ENCODE measurements at regions of chr14 and their contacts with region 1.

Region 1: GRCh38 chr14:21852061-21852664 is 178.5 kb upstream of the OR4E1 start:
- DNase-seq: peak; percentile 77
- ATAC-seq: peak; percentile 83
- H3K4me3 Mint-ChIP-seq: no peak overlapping the region
- H3K27ac Mint-ChIP-seq: no peak overlapping the region
- H3K4me1 Mint-ChIP-seq: no peaks in the 10 kb centered on the region
- H3K27me3 Mint-ChIP-seq: peaks cover 20% of the 10 kb centered on the region
- CTCF ChIP-seq: peak; percentile 30

Region 2: GRCh38 chr14:21840765-21841164 is 11.4 kb before region 1 on chr14:
- CTCF ChIA-PET with region 1: interaction called, 42 read pairs
- POLR2A ChIA-PET with region 1: no interaction called
- DNase-seq: no peak
- ATAC-seq: peak; percentile 65
- H3K4me3 Mint-ChIP-seq: no peak overlapping the region
- H3K27ac Mint-ChIP-seq: no peak overlapping the region
- H3K4me1 Mint-ChIP-seq: no peaks in the 10 kb centered on the region
- H3K27me3 Mint-ChIP-seq: peaks cover 32% of the 10 kb centered on the region
- CTCF ChIP-seq: no peak

Region 3: DNA sequence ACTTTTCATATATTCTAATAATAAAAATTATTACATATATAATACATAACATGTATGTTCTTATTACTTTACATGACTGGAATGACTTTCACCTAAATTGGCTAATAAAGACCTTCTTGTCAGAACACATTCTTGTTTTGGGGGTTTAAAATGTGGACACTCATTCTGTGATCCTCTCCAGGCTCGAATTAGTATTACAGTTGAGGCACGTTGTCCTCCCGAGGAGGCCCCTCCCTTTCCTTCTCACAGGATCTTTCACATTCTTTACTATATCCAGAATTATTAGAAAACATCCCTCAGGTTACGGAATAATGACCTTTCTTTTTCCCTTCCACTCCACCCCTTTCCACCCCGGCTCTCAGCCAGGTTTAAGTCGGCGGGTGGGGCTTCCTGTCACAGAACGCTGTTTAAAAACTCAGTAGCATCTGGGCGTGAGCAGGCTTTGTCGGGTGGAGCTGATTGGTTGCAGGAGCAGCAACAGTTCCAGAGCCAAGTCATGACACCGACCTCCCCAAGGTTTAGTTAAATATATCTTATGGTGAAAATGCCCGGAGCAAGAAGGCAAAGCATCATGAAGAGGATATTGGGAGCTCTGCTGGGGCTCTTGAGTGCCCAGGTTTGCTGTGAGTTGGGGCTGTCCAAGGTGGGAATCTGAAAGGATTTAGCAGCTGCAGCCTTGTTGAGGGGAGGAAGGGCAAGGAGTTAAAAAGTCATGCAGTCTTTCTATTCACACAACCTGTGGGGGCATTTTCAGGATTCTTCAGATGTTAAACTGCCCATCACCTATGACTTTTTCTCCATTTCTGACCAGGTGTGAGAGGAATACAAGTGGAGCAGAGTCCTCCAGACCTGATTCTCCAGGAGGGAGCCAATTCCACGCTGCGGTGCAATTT is 218.2 kb after region 1 on chr14:
- CTCF ChIA-PET with region 1: no interaction called
- POLR2A ChIA-PET with region 1: no interaction called
- DNase-seq: peak; percentile 41
- ATAC-seq: peak; percentile 94
- H3K4me3 Mint-ChIP-seq: peak overlapping the region; percentile 68
- H3K27ac Mint-ChIP-seq: peak overlapping the region; percentile 10; the same call in 1 of the 2 replicates
- H3K4me1 Mint-ChIP-seq: peaks cover 11% of the 10 kb centered on the region
- H3K27me3 Mint-ChIP-seq: peaks cover 11% of the 10 kb centered on the region
- CTCF ChIP-seq: no peak

Measured in WTC11 (cell line).